Posterior cingulate gyrus (tissue), 11 donors: ENCODE measurements at regions of chr9 and their contacts with region 1.

Region 1: DNA sequence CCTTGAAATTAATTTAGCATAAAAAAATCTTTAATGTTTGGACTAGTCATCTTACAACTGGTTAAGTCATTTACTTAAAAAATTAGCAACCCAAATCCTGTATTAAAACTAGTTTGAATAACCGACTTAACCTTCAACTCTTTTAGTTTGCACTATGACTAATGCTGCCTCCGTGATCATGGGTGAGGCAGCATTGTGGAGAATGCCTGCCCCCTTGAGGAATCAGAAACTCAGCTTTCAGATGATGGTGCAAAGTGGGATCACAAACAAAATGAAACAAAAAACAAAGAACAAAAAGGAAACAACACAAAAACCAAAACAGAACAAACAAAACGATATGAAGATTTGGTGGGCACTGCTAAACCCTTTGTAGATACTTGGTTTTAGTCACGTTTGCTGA is 127.0 kb upstream of the PALM2AKAP2 start:
- DNase-seq: peak in 6 of 10 donors; percentile 22 to 87 (median 40)

Region 2: DNA sequence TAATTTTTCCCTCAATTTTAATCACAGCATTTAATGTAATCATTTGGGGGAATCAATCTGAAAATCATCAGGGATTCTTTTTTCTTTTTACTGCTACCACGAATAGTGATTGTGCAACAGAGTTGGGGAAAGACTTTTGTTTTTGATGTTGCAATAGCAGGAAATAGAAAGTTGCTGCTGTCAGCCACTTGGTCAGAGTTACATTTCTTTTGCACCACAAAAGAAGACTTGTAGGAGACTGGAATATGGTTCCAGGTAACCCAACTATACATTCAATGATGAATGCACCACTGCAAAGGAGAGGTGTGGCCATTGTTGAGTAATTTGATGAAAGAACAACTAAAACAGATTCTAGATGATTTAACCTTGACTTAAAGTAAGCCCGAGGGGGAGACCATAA is 80.7 kb after region 1 on chr9:
- intact Hi-C with region 1: no loop called
- DNase-seq: no peak

Region 3: DNA sequence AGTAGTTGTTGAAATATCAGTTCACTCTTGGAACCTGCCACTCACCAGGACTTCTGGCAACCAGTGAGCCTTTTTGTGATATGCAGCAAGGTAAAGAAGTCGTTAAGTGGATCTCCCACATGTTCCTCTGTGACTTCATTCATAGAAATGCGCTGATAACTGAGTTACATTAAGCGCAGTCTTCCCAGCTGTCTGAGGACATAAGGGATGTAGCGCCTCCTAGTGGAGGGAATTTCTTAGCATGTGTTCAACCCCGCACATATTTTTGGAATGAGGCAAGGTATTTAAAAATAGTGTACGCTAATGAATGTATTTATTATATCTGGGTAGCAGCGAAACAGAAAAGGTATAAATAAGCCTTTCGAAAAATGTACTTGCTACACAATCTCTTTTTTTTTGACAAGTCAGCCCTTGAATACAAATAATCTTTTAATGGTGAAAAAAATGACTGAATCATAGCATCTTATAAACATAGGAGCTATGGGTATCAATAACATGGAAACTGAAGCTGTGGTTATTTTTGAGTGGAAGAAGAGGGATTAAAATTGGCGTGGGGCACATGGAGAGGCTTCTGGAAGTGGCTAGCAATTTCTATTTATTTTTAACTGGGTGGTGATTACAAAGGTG is 165.0 kb after region 1 on chr9:
- intact Hi-C with region 1: loop called (anchors 5 kb)
- DNase-seq: peak in 3 of 10 donors; percentile 43 to 63 (median 45)

Region 4: DNA sequence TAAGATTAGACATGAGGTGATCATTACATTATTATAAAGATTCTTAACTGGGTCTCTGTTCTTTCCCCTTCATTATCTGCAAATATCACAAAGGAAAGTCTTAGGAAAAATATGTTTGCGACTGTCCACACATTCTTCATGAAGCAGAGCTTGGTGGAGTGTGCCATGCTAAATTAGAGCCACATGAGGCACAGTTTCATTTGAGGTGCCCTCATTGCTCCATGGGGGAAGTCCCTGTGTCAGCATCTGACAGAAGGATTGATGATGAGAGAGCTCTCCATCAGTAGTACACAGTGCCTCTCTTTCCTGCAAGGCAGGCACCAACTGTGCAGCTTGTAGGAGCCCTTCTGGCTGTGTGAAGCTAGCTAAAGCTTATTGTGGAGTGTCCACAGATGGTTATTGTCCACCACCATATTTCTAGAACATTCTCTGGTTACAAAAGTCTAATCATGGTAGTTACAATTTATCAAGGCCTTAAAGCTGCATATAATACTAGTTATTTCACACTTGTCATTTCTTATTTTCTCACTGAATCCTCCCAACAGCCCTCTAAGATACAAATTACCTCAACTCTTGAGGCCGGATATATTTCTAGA is 491.1 kb after region 1 on chr9:
- intact Hi-C with region 1: no loop called
- DNase-seq: no peak